ENCODE measurements at regions of chr10 and their contacts with region 1.

Region 1: GRCh38 chr10:3068201-3068967 is 1.0 kb downstream of the PFKP start:
- DNase-seq: peak; percentile 62 to 84 (median 73)
- ATAC-seq: peak; percentile 2 to 50 (median 40)
- H3K4me3 ChIP-seq: peak overlapping the region; percentile 65 to 91 (median 78)
- H3K27ac ChIP-seq: peak overlapping the region; percentile 19 to 97 (median 88)
- H3K4me1 ChIP-seq: peaks cover 0 to 65% (median 26%) of the 10 kb centered on the region in 12 donors
- H3K27me3 ChIP-seq: peaks cover 0 to 9% (median 0%) of the 10 kb centered on the region in 9 donors
- CTCF ChIP-seq: peak in 8 of 12 donors; percentile 21 to 56 (median 31)
- POLR2A ChIP-seq: no peak

Region 2: DNA sequence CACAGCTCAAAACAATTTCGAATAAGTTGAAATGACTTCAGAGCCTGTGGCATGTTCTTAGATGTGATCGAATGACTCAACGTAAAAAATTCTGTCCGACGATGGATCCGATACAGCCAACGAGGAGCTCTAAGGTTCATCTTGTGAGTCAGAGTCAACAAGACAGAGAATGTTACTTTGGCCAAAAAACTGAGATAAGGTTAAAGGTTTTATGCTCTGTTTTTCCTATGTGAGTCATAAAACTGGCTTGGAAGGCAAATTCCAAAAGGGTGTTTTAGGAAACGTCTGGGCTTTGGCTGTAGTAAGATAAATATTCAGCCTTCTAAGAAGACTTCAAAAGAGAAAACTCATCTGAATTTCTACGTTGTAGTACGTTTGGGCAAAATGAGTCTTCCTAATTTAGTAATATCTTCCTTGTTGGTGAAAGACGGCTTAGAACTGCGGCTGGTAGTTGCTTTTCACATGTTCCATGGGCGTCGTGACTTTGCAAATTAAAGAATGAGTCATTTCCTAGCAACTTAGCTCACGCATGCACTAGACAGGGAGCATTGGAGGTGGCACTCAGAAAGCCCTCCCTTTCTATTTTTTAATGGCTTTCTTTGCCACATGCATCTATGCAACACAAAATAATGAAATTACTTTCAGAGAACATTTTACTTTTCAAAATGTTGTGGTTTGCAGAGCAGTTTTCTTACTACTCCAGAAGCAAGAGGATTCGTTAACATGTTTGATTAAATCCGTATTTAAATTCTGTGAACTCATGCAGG is 27.2 kb after region 1 on chr10:
- intact Hi-C with region 1: loop called in 1 of 10 experiments (anchors 1 kb)
- DNase-seq: peak in 1 of 5 donors; percentile 45
- ATAC-seq: peak; percentile 38 to 73 (median 68)
- H3K4me3 ChIP-seq: peak overlapping the region in 5 of 12 donors; percentile 4 to 43 (median 19)
- H3K27ac ChIP-seq: peak overlapping the region; percentile 6 to 83 (median 72)
- H3K4me1 ChIP-seq: peaks cover 0 to 57% (median 27%) of the 10 kb centered on the region in 12 donors
- H3K27me3 ChIP-seq: no peaks in the 10 kb centered on the region
- CTCF ChIP-seq: no peak
- POLR2A ChIP-seq: no peak

Region 3: DNA sequence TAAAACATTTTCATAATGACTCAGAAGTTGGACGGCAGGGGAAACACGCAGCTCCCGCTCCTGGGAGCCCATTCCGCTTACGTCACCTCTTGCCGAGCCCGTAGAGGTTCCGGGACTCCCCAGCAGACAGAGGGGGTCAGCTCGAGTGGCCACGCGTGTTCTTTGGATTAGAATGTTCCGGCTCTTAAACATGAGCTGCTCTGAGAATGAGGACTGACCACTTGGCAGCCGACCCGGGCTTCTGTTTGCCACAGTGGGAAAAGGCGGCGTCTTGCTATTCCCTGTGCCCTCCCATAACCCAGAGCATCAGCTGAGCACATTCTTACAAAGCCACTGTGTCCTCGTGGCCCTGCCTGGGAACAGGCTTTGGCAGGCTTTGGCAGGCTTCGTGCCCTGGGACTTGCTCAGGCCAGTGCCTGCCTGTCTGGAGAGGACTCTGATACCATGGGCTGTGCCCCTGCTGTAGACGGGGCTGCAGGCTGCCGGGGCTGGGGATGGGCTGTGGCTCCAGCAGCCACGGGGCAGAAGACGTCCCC is 39.1 kb after region 1 on chr10:
- intact Hi-C with region 1: loop called in 1 of 10 experiments (anchors 5 kb)
- DNase-seq: peak; percentile 76 to 93 (median 81)
- ATAC-seq: peak; percentile 85 to 93 (median 91)
- H3K4me3 ChIP-seq: peak overlapping the region in 1 of 12 donors; percentile 6
- H3K27ac ChIP-seq: peak overlapping the region; percentile 59 to 91 (median 78)
- H3K4me1 ChIP-seq: peaks cover 0 to 66% (median 25%) of the 10 kb centered on the region in 12 donors
- H3K27me3 ChIP-seq: no peaks in the 10 kb centered on the region
- CTCF ChIP-seq: no peak
- POLR2A ChIP-seq: peak in 1 of 2 donors; percentile 21

Region 4: DNA sequence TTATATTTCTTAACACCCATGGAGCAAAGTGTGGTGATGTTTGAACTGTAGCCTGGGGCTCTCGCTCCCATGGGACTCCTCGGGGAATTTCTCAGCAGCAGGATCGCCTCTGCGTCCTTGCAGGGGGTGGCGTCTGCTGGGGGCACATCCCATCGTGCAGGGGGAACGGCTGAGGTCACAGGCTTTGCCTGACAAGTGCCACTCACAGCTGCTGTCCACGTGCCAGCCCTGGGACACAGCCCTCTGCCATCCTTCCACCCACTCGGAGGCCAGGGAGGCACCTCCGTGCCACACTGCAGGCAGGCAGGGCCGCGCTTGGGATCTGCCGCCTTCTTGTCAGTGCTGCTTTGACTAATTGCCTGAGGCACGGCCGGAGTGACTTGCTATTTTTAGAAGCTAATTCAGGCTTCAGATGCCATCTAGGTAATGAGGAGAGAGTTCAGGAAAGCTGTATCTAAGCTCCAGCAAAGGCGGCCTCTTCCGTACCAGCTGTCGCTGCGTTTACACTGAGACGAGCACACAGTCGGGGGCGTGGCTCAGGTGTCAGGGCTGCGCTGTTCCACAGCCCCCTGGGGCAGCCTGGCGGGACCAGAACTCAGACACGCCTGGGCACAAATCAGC is 58.5 kb after region 1 on chr10:
- intact Hi-C with region 1: loop called in 2 of 10 experiments (anchors 5 kb)
- DNase-seq: peak in 4 of 5 donors; percentile 58 to 82 (median 74)
- ATAC-seq: peak; percentile 49 to 76 (median 63)
- H3K4me3 ChIP-seq: no peak overlapping the region
- H3K27ac ChIP-seq: peak overlapping the region in 8 of 12 donors; percentile 29 to 68 (median 58)
- H3K4me1 ChIP-seq: peaks cover 0 to 46% (median 17%) of the 10 kb centered on the region in 12 donors
- H3K27me3 ChIP-seq: no peaks in the 10 kb centered on the region
- CTCF ChIP-seq: no peak
- POLR2A ChIP-seq: no peak

Region 5: DNA sequence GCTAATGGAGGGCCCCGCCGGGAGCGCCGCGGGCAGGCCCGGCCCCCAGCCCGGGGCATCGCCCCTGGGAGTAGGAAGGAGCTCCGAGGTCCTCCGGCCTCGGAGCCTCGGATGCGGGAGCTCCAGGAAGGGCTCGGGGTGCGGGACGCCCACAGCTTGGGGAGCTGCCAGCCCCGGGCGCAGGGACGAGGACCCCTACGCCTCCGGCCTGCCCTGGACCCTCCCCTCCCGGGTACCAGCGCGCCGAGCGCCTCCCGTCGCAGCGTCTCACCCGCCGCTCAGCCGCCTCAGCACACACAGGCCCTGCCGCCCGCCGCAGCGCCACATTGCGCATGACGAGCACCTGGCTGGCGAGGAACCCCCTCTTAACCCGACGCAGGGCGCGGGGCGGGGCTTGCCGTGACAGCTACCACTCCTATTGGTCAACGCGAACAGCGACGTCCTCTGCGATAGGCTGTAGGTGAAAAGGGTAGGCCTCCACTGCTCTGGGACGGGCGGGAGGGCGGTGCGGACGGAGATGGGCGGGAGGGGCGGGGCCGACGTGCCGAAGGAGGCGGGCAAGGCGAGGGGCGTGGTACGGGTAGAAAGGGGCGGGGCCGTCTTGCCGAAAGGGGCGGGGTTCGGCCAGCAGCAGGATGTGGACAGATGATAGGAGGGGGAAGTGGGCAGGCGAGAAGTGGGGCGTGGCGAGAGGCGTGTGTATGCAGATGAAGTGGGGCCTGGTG is 104.2 kb after region 1 on chr10 and contains the start of gene PITRM1:
- intact Hi-C with region 1: loop called in 1 of 10 experiments (anchors 1 kb)
- DNase-seq: peak; percentile 98 to 99 (median 99)
- ATAC-seq: peak; percentile 98 to 99 (median 98)
- H3K4me3 ChIP-seq: peak within 1 kb of the TSS; percentile 39 to 98 (median 86)
- H3K27ac ChIP-seq: peak within 1 kb of the TSS; percentile 43 to 91 (median 86)
- H3K4me1 ChIP-seq: peaks cover 0 to 22% (median 9%) of the 10 kb centered on the region in 12 donors
- H3K27me3 ChIP-seq: no peaks in the 10 kb centered on the region
- CTCF ChIP-seq: no peak
- POLR2A ChIP-seq: peak; percentile 96 to 99
- total RNA-seq, gene PITRM1: 65.8 to 128 (median 93.0) TPM